AG04449 (cell line): ENCODE measurements at regions of chr10 and their contacts with region 1.

Region 1: DNA sequence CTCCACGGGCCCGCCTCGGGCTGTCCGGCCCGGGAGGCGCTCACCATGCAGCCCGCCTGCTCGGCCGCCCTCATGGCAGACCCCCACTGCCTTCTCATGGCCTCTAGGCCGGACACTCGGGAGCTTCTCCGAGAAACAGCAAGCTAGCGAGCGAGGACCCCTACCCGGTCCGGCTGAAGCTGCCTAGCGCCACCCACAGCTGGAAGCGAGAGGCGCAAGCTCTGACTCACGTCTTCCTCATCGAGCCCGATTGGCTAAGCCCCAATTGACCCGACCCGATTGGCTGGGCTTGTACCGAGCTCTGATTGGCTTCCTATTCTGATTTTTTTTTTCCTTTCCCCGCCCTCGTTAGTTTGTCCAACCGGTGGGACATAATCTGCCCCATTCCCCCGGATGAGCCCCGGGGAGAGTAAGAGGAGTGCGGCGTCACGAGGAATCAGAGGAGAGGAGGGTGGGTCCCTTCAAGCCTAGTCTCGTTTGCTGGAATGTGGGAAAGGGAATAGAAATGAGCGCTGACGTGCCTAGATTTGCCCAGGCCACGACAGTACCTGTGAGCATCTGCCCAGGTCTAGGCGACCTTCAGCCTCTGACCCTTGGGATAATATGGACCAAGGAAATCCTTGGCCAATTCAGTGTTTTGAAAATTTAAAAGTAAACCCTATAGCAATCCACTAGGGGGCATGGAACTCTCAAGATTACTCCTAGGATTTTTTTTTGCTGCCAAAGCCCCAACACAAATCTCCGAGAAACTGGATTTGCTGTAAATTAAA is at the start of gene TYSND1:
- DNase-seq: peak; percentile 82
- H3K4me3 ChIP-seq: peak within 1 kb of the TSS; percentile 66
- CTCF ChIP-seq: peak; percentile 91

Region 2: DNA sequence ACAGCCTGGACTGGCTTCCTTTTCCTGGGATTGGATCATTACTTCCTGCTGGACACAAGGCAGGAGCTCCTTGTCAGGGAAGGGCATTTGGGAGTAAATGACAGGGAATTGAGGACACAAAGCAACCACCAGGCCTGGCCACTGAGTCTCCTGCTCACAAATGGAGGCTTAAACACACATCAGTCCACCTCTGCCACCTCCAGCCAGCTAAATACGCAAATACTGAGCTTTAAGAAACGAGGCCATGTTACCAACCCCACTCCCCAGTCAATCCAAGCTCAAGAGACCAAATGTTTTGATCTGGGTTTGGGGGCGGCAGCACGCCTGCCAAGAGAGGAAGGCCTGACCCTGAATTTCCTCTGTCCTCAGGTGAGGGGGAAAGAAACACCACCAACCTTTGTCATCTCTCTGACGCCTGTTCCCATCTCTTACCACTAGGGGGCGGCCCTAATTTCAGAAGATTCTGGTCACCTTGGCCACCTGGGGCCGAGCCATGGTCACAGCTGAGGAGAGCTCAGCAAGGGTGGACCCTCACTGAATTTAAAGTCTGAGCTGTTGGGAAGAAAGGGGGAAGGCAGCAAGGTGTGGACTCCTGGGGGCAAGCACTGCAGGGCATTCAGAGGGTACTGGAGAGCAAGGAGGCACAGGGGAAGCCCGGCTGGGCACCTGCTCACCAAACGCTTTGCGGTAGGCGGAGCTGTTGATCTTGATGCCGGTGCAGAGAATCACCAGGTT is 30.6 kb before region 1 on chr10:
- CTCF ChIA-PET with region 1: interaction called, 60 read pairs
- POLR2A ChIA-PET with region 1: interaction called, 3 read pairs
- DNase-seq: no peak
- H3K4me3 ChIP-seq: no peak overlapping the region
- CTCF ChIP-seq: peak; percentile 71

Region 3: GRCh38 chr10:70132098-70133029 is 14.3 kb before region 1 on chr10 and contains the start of gene AIFM2:
- CTCF ChIA-PET with region 1: interaction called, 14 read pairs
- POLR2A ChIA-PET with region 1: interaction called, 6 read pairs
- DNase-seq: no peak
- H3K4me3 ChIP-seq: peak within 1 kb of the TSS; percentile 61
- CTCF ChIP-seq: no peak

Region 4: DNA sequence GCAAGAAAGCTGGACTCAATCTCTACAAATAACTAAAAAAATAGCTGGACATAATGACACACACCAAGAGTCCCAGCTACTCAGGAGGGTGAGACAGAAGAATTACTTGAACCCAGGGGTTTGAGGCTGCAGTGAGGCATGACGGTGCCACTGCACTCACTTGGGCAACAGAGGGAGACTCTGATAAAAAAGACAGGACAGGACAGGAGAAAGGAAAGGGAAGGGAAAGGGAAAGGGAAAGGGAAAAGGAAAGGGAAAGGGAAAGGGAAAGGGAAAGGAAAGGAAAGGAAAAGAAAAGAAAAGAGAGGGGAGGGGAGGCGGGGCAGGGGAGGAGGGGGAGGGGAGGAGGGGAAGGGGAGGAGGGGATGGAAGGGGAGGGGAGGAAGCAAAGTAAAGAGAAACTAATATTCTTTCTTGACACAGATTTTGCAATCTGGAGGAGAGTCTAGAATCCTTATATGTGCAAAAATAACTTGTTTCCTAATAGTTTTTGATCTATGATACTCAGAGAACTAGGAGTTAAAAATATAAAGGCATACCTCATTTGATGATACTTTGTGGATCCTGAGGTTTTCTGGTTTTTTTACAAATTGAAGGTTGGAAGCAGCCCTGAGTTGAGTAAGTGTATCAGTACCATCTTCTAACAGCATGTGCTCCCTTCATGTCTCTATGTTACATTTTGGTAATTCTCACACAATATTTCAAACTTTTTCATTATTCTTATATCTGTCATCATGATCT is 15.6 kb after region 1 on chr10:
- CTCF ChIA-PET with region 1: interaction called, 58 read pairs
- POLR2A ChIA-PET with region 1: interaction called, 4 read pairs
- DNase-seq: no peak
- H3K4me3 ChIP-seq: no peak overlapping the region
- CTCF ChIP-seq: no peak

Region 5: DNA sequence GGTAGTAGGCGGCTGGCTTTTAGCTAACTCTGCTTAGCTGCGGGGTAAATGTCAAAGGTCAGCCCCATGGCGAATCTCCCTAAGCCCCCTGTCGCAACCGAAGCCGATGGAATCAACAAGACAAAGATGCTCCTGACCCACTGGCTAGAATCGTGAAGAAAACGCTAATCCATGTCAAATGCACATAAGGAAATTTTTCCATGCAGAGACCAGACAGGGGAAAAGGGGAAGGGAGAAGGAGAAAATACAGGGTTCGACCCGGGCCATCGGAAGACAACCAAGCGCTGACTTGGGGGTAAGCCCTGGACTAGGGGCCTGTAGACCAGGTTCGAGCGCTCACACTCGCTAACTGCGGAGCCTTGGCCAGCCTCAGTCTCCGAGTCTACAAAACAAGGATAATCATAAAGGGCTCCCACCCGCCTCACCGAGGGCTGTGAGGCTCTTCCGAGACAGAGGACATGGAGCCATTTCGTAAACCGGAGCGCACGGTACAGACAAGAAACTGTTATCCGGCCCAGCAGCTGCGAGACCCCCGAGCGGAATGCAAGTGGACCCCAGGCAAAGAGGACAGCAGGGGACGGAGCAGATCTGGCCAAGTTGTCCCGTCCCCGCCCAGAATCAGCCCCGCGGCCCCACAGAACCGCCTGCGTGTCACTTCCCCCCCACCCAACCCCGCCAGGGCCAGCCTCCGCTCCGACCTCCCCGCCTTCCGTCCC is 23.1 kb after region 1 on chr10:
- CTCF ChIA-PET with region 1: interaction called, 44 read pairs
- POLR2A ChIA-PET with region 1: interaction called, 18 read pairs
- DNase-seq: no peak
- H3K4me3 ChIP-seq: peak overlapping the region; percentile 95
- CTCF ChIP-seq: no peak

Region 6: GRCh38 chr10:70191972-70192305 is 45.3 kb after region 1 on chr10:
- CTCF ChIA-PET with region 1: interaction called, 16 read pairs
- POLR2A ChIA-PET with region 1: no interaction called
- DNase-seq: peak; percentile 95
- H3K4me3 ChIP-seq: no peak overlapping the region
- CTCF ChIP-seq: no peak

Region 7: DNA sequence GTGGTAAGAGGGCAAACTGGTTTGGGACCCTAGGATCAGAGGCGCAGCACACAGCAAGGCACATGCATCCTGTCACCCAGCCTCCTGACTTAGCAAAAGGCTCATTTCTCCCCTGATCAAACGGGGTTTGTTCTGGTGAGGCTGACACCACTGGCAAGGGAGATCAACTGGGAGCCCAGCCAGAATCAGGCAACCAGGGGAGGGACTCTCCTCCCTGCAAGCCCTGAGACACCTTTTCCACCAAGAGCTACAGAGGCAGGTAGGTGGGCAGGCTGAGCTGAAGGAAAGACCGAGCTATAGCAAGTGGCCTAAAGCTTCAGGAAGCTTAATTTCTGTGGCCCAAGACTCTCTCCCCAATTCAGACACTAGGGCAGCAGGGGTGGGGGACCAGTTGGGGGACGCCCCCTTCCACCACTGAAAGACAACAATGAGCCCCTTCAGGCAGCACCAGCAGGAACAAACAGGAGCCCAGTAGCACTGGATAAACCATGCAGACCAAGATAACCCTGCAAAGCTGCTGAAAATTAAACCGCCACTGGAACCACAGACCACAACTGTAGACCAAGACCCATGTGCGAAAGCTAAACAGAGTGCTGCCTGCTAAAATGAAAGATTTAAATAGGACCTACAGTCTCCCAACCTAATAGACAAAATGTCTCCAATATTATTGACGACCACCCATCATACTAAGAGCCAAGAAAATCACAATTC is 50.7 kb after region 1 on chr10:
- CTCF ChIA-PET with region 1: interaction called, 16 read pairs
- POLR2A ChIA-PET with region 1: no interaction called
- DNase-seq: no peak
- H3K4me3 ChIP-seq: no peak overlapping the region
- CTCF ChIP-seq: no peak